ENCODE measurements at regions of chr10 and their contacts with region 1.

Region 1: DNA sequence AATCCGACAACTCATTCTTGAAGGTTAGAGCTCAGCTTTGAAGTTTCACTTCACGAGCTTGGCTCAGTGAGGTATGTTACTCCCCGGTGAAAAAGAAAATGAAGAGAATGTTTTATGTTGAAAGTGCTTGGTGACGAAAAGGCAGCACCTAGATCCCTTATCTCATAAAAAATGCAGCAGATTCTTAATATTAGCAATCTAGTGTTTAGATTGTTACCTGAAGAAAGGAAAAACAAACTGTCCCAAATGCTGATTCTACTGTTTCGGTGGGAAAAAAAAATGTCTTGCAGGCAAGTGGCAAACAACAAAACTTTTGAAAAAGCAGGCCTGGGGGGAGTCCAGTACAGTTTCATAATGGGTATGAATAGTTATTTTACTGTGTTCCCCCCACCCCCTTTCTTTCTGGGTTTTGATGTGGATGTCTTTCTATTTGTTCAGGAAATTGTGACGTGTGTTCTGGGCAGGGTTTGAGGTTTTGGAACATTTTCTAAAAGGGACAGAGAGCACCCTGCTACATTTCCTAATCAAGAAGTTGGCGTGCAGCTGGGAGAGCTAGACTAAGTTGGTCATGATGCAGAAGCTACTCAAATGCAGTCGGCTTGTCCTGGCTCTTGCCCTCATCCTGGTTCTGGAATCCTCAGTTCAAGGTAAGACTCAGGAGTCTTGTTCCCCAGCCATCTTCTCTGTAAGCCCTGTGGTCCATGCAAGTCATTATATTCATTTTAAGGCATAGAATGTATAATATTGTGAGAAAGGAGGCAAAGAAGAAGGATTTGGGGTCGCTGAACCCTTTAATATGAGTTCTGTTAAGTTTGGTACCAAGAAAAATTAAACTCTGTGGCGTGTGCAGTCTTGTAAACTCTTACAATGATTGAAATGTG is at the start of gene SRGN:
- DNase-seq: peak in 1 of 2 donors; percentile 88
- ATAC-seq: peak; percentile 73 to 88 (median 82)
- H3K4me3 ChIP-seq: peak within 1 kb of the TSS in 9 of 10 donors; percentile 40 to 71 (median 53)
- H3K27ac ChIP-seq: peak within 1 kb of the TSS; percentile 69 to 98 (median 84)
- H3K4me1 ChIP-seq: peaks cover 0 to 58% (median 17%) of the 10 kb centered on the region in 9 donors
- H3K27me3 ChIP-seq: no peaks in the 10 kb centered on the region
- CTCF ChIP-seq: no peak
- total RNA-seq, gene SRGN: 30.0 to 156 (median 51.8) TPM

Region 2: GRCh38 chr10:69051303-69051702 is 36.5 kb before region 1 on chr10:
- intact Hi-C with region 1: loop called in 5 of 10 experiments (anchors 5 kb)
- DNase-seq: no peak
- ATAC-seq: peak in 7 of 8 donors; percentile 36 to 62 (median 40)
- H3K4me3 ChIP-seq: no peak overlapping the region
- H3K27ac ChIP-seq: peak overlapping the region in 6 of 10 donors; percentile 41 to 94 (median 78)
- H3K4me1 ChIP-seq: peaks cover 0 to 93% (median 12%) of the 10 kb centered on the region in 9 donors
- H3K27me3 ChIP-seq: no peaks in the 10 kb centered on the region
- CTCF ChIP-seq: no peak

Region 3: GRCh38 chr10:69061305-69062161 is 26.3 kb before region 1 on chr10:
- intact Hi-C with region 1: loop called in 5 of 10 experiments (anchors 1 to 5 kb)
- DNase-seq: peak; percentile 52 to 76
- ATAC-seq: peak; percentile 83 to 91 (median 86)
- H3K4me3 ChIP-seq: peak overlapping the region in 7 of 10 donors; percentile 4 to 35 (median 19)
- H3K27ac ChIP-seq: peak overlapping the region; percentile 84 to 95 (median 90)
- H3K4me1 ChIP-seq: peaks cover 5 to 98% (median 49%) of the 10 kb centered on the region in 9 donors
- H3K27me3 ChIP-seq: no peaks in the 10 kb centered on the region
- CTCF ChIP-seq: no peak

Region 4: GRCh38 chr10:69073026-69073425 is 14.8 kb before region 1 on chr10:
- intact Hi-C with region 1: loop called in 1 of 10 experiments (anchors 2 kb)
- DNase-seq: no peak
- ATAC-seq: peak in 7 of 8 donors; percentile 22 to 72 (median 47)
- H3K4me3 ChIP-seq: no peak overlapping the region
- H3K27ac ChIP-seq: peak overlapping the region in 5 of 10 donors; percentile 24 to 62 (median 41)
- H3K4me1 ChIP-seq: peaks cover 0 to 35% (median 0%) of the 10 kb centered on the region in 9 donors
- H3K27me3 ChIP-seq: no peaks in the 10 kb centered on the region
- CTCF ChIP-seq: no peak

Region 5: DNA sequence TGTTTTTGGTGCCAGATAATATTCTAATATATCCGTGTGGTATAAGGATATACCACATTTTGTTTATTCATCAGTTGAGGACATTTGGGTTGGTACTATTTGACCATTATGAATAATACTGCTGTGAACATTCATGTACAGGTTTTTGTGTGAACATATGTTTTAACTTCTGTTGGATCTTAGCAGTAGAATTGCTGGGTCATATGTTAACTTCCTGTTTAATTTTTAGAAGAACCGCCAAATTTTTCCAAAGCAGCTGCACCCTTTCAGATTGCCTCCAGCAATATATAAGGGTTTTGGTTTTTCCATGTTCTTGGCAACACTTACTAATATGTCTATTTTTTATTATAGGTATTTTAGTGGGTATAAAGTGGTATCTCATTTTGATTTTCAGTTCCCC is 58.9 kb after region 1 on chr10:
- intact Hi-C with region 1: no loop called
- DNase-seq: no peak
- ATAC-seq: no peak
- H3K4me3 ChIP-seq: no peak overlapping the region
- H3K27ac ChIP-seq: no peak overlapping the region
- H3K4me1 ChIP-seq: peaks cover 0 to 13% (median 0%) of the 10 kb centered on the region in 9 donors
- H3K27me3 ChIP-seq: no peaks in the 10 kb centered on the region
- CTCF ChIP-seq: no peak

Region 6: DNA sequence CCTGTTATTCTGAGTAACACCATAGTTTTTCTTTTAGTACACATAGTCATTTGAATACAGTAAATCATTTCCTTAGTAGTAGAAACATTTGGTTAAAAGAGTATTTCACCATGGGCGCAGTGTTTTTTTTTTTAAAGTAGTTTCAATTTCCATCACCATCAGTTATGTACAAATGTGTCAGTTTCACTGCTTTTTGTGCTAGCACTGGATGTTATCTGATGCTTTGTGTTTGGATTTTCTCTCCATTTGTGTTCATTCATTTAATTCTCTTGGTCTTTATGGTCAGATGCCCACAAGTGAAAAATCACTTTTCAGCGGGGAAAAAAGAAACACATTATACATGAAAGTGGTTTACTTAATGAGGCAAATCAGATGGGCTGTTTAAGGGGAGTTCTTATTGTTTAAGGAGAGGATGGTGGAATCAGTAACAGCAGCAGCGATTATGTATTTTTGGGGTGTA is 174.5 kb after region 1 on chr10:
- intact Hi-C with region 1: no loop called
- DNase-seq: no peak
- ATAC-seq: no peak
- H3K4me3 ChIP-seq: no peak overlapping the region
- H3K27ac ChIP-seq: no peak overlapping the region
- H3K4me1 ChIP-seq: peaks cover 0 to 8% (median 0%) of the 10 kb centered on the region in 9 donors
- H3K27me3 ChIP-seq: no peaks in the 10 kb centered on the region
- CTCF ChIP-seq: no peak

Region 7: GRCh38 chr10:69925111-69925510 is 837.3 kb after region 1 on chr10:
- intact Hi-C with region 1: no loop called
- DNase-seq: no peak
- ATAC-seq: no peak
- H3K4me3 ChIP-seq: no peak overlapping the region
- H3K27ac ChIP-seq: no peak overlapping the region
- H3K4me1 ChIP-seq: no peaks in the 10 kb centered on the region
- H3K27me3 ChIP-seq: peaks cover 0 to 3% (median 0%) of the 10 kb centered on the region in 7 donors
- CTCF ChIP-seq: no peak